Ascending aorta (tissue), 2 donors: ENCODE measurements at regions of chrX and their contacts with region 1.

Region 1: DNA sequence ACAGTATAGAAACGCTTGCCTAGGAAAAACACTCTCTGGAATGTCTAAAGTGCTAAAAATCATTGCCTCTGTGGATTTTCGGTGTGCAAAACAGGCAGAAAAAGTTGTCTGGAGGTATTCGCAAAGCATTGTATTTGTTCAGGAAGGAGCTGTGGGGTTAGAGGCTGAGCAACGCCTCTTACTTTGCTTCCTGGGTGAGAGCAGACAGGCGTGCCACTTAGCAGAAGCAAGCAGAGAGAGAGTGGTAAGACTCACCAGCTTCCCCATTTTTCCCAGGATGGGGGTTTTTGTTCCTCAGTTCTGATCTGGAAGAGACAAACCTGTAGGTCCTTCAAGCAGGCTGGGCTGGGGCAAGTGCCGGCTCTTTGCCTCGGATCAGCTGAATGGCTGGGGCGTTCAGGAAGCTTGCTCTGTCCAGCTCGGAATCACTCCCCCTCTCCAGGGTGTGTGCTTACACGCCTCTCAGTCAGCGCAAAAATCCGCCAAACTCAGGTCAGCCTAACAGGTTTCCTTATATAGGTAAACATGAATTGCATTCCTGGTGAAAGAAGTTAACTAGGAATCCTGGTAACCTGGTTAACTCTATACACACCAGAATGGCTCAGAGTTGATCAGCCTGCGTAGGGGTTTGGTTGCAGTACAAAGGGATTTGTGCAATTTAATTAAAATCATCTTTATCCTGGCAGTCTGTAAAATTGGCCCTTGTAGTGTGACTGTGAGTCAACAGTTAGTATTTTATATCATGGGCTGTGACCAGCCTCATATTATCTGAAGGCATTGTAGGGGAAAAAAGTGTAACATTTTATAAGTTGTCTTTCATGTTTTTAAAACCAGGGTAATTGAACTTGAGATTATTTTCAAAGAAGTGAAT is 213.1 kb upstream of the MID1 start:
- DNase-seq: peak in 1 of 2 donors; percentile 64
- H3K4me3 ChIP-seq: peak overlapping the region; percentile 40 to 53
- H3K27ac ChIP-seq: peak overlapping the region; percentile 45 to 56
- H3K4me1 ChIP-seq: no peaks in the 10 kb centered on the region
- H3K27me3 ChIP-seq: no peaks in the 10 kb centered on the region
- CTCF ChIP-seq: no peak

Region 2: DNA sequence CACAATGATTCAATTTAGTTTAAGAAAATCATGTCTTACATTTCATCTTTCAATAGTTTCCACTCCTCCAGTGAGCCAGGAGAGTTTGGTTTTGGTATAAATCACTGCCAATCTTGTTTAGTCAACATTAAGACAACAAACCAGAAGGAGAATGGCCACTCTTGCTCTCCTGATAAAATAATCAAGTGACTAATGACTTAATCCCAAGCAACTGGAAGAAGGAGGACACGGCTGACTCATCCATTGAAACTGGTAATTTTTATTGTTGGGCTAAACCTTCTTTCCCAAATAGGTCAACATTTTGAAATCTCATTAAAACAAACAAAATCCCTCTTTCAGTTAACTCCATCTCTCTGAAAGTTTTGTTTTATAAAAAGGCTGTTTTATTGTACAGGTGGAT is 446.5 kb before region 1 on chrX:
- intact Hi-C with region 1: no loop called
- DNase-seq: no peak
- H3K4me3 ChIP-seq: no peak overlapping the region
- H3K27ac ChIP-seq: no peak overlapping the region
- H3K4me1 ChIP-seq: no peaks in the 10 kb centered on the region
- H3K27me3 ChIP-seq: no peaks in the 10 kb centered on the region
- CTCF ChIP-seq: no peak

Region 3: DNA sequence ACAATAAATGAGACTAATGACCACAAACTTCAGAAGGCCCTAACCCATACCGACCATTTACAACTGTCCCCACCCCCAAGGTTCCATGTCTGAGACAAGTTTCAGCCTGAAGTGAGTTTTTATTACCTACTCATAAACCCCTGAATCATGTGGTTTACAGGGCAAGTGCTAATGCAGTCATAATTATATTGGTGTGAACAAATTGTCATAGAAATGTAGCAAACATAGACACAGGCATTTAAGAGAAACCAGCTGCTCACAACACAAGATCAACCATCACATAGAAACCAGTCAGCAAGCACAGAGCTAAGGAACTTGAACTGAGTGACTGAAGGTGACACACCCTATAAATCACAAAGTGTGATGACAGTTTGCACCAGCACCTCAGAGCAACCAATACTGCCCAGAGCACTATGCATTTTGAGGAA is 39.3 kb before region 1 on chrX:
- intact Hi-C with region 1: loop called (anchors 5 kb)
- DNase-seq: no peak
- H3K4me3 ChIP-seq: no peak overlapping the region
- H3K27ac ChIP-seq: peak overlapping the region in 1 of 2 donors; percentile 22
- H3K4me1 ChIP-seq: no peaks in the 10 kb centered on the region
- H3K27me3 ChIP-seq: no peaks in the 10 kb centered on the region
- CTCF ChIP-seq: no peak